CD8-positive, alpha-beta T cell (primary cell): ENCODE measurements at regions of chr17 and their contacts with region 1.

Region 1: DNA sequence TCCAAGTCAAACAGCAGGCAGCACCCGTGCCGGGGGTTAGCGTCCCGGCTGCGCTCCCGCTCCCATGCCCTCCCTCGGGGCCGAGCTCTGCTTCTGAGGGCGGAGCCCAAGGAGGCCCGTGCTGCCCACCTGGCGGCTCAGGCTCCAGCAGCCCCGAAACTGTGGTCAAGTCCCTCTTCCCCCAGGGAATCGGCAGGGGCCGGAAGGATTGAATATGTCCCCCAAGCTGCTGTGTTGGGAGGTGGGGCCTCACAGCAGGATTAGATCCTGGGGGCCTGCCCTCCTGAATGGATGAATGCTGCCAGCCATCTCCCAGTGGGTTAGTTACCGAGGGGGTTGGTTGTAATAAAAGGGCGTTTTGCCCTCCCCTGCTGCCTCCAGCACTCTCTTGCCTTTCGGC is 33.9 kb downstream of the MAP2K3 start:
- DNase-seq: no peak
- ATAC-seq: no peak
- H3K4me3 ChIP-seq: no peak overlapping the region
- H3K4me3 Mint-ChIP-seq: no peak overlapping the region
- H3K27ac ChIP-seq: no peak overlapping the region
- H3K27ac Mint-ChIP-seq: no peak overlapping the region
- H3K4me1 ChIP-seq: no peaks in the 10 kb centered on the region
- H3K4me1 Mint-ChIP-seq: peaks cover 5% of the 10 kb centered on the region
- H3K27me3 ChIP-seq: no peaks in the 10 kb centered on the region
- H3K27me3 Mint-ChIP-seq: no peaks in the 10 kb centered on the region
- CTCF ChIP-seq: no peak

Region 2: DNA sequence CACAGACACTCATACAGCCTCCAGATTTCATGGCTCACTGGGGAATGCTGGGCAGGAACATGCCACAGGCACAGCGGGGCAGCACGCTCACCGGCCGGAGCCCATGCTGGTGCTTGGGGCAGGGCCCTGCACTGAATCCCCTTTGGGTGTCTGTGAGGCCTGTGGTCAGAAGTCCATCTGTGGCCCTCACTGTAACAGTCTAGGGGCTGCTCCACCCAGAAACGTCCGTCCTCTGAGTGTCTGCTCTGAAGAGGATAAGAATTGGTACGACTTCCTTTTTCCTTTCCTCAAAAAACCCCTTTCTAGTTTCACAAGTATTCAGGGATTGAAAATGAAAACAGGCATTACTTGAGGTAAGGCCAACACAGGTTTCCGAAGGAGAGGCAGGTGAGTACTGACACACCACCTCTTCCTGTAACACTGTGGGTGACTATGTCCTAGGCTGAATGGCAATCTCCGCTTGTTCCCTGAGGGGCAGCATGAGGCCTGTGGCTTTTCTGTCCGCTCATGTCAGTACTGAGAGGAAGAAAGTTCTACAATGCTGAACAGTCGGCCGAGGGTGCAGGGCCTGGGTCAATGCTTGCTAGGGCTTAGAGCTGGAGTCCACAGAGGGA is 147.0 kb before region 1 on chr17:
- CTCF ChIA-PET with region 1: no interaction called
- POLR2A ChIA-PET with region 1: no interaction called
- intact Hi-C with region 1: no loop called
- DNase-seq: peak in 1 of 9 experiments; percentile 38
- ATAC-seq: no peak
- H3K4me3 ChIP-seq: no peak overlapping the region
- H3K4me3 Mint-ChIP-seq: no peak overlapping the region
- H3K27ac ChIP-seq: no peak overlapping the region
- H3K27ac Mint-ChIP-seq: no peak overlapping the region
- H3K4me1 ChIP-seq: no peaks in the 10 kb centered on the region
- H3K4me1 Mint-ChIP-seq: peaks cover 12% of the 10 kb centered on the region
- H3K27me3 ChIP-seq: no peaks in the 10 kb centered on the region
- H3K27me3 Mint-ChIP-seq: no peaks in the 10 kb centered on the region
- CTCF ChIP-seq: no peak

Region 3: DNA sequence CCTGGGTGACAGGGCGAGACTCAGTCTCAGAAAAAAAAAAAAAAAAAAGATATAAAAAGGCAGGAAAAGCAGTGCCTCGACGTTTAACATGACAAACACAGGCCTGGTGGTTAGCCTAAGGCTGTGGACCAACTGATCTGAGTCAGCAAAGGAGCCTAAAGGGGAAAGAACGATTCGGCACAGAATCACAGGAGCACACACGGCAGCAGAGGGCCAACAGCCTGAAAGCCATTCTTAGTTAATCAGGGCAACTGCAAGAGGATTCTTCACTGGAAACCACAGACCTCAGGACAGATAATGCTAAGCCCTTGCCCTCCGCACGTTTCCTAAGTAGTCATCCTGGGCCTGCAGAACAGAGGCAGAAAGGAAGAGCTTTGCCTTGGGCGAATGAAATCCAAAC is 119.1 kb before region 1 on chr17:
- CTCF ChIA-PET with region 1: no interaction called
- POLR2A ChIA-PET with region 1: no interaction called
- intact Hi-C with region 1: no loop called
- DNase-seq: no peak
- ATAC-seq: no peak
- H3K4me3 ChIP-seq: no peak overlapping the region
- H3K4me3 Mint-ChIP-seq: no peak overlapping the region
- H3K27ac ChIP-seq: no peak overlapping the region
- H3K27ac Mint-ChIP-seq: no peak overlapping the region
- H3K4me1 ChIP-seq: no peaks in the 10 kb centered on the region
- H3K4me1 Mint-ChIP-seq: peaks cover 35% of the 10 kb centered on the region
- H3K27me3 ChIP-seq: no peaks in the 10 kb centered on the region
- H3K27me3 Mint-ChIP-seq: no peaks in the 10 kb centered on the region
- CTCF ChIP-seq: no peak

Region 4: DNA sequence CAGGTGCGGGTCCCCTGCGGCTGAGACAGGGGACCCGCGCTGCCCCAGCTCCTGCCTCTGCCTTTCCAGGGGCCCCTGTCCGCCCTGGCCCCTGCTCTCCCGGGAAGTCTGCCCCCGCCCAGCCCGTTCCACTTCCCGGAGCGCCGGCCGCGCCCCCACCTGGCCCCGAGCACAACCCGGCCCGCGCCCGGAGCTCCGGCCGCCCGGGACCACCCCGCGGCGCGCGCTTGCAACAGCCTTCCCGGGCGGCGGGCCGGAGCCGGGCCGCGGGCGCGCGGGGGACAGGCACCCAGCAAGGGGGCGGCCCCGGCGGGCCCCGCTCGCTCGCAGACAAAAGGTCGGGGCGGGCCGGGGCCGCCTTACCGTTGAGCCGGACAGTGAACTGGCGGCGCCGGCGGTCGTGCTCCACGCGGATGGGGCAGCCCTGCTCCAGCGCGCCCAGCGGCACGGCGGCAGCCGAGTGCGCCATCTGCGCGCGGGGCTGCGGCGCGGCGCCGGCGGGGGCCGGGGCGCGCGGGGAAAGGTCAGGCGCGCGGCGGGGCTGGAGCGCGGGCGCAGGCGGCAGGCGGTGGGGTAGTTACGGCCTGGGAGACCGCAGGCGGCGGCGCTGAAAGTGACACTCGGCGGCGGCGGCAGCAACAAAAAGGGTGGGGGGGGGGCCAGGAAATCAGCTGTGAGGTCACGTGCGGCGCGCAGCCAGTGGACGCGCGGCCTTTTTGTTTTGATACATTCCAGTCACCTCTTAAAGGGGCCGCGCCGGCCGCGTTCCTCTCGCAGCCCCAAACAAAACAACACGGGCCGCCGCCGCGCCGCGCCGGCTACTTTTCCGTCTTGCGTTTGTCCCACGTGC is 65.4 kb before region 1 on chr17 and contains the start of gene NATD1:
- CTCF ChIA-PET with region 1: no interaction called
- POLR2A ChIA-PET with region 1: no interaction called
- intact Hi-C with region 1: loop called (anchors 2 kb)
- DNase-seq: peak; percentile 54 to 92 (median 80)
- ATAC-seq: peak; percentile 79
- H3K4me3 ChIP-seq: peak within 1 kb of the TSS; percentile 55 to 73
- H3K4me3 Mint-ChIP-seq: peak within 1 kb of the TSS; percentile 86
- H3K27ac ChIP-seq: peak within 1 kb of the TSS; percentile 62 to 64
- H3K27ac Mint-ChIP-seq: peak within 1 kb of the TSS; percentile 92
- H3K4me1 ChIP-seq: peaks cover 17% of the 10 kb centered on the region
- H3K4me1 Mint-ChIP-seq: peaks cover 34% of the 10 kb centered on the region
- H3K27me3 ChIP-seq: no peaks in the 10 kb centered on the region
- H3K27me3 Mint-ChIP-seq: no peaks in the 10 kb centered on the region
- CTCF ChIP-seq: no peak
- total RNA-seq, gene NATD1: 6.3 to 6.6 TPM

Region 5: DNA sequence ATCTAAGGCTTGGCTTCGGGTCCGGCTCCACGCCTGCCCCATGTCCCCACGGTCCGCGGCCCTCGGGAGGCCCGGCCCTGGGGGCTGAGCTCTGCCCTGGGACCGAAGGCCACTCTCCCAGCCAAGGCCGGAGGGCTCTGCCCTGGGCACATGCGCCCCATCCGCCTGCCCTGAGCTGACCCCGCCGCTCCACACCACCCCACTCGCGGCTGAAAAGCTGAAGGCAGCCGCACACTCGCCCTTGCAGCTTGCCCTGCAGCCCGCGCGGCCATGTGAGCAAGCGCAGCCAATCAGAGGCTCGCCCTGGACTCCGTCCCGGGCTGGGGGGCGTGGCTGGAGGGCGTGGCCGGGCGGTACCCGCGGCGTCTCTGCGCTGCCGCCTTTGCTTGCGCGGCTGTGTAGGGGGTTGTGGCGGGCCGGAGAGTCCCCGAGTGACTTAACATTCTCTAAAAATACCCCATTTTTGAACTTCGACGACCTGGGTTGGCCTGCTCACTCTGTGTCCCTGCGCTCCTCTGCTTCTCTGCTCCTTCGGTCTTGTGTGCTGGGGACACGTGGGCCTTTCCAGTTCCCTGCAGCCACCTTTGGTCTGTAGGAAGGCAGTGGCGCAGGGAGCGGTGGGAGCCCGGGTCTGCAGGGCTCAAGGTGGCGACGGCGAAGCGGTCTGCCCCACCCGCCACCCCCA is 42.7 kb before region 1 on chr17:
- CTCF ChIA-PET with region 1: interaction called, 3 read pairs
- POLR2A ChIA-PET with region 1: no interaction called
- intact Hi-C with region 1: loop called (anchors 2 kb)
- DNase-seq: peak; percentile 83 to 98 (median 94)
- ATAC-seq: peak; percentile 84
- H3K4me3 ChIP-seq: peak overlapping the region; percentile 60 to 80
- H3K4me3 Mint-ChIP-seq: peak overlapping the region; percentile 87
- H3K27ac ChIP-seq: peak overlapping the region; percentile 57 to 75
- H3K27ac Mint-ChIP-seq: peak overlapping the region; percentile 90
- H3K4me1 ChIP-seq: peaks cover 37% of the 10 kb centered on the region
- H3K4me1 Mint-ChIP-seq: peaks cover 42% of the 10 kb centered on the region
- H3K27me3 ChIP-seq: no peaks in the 10 kb centered on the region
- H3K27me3 Mint-ChIP-seq: no peaks in the 10 kb centered on the region
- CTCF ChIP-seq: no peak

Region 6: GRCh38 chr17:21284319-21285163 is 33.9 kb before region 1 on chr17 and contains the start of gene MAP2K3:
- CTCF ChIA-PET with region 1: interaction called, 3 read pairs
- POLR2A ChIA-PET with region 1: no interaction called
- intact Hi-C with region 1: loop called (anchors 1 to 2 kb)
- DNase-seq: peak; percentile 84 to 97 (median 94)
- ATAC-seq: peak; percentile 65
- H3K4me3 ChIP-seq: peak within 1 kb of the TSS; percentile 78 to 81
- H3K4me3 Mint-ChIP-seq: peak within 1 kb of the TSS; percentile 94
- H3K27ac ChIP-seq: peak within 1 kb of the TSS; percentile 69 to 99
- H3K27ac Mint-ChIP-seq: peak within 1 kb of the TSS; percentile 96
- H3K4me1 ChIP-seq: peaks cover 45% of the 10 kb centered on the region
- H3K4me1 Mint-ChIP-seq: peaks cover 54% of the 10 kb centered on the region
- H3K27me3 ChIP-seq: no peaks in the 10 kb centered on the region
- H3K27me3 Mint-ChIP-seq: no peaks in the 10 kb centered on the region
- CTCF ChIP-seq: no peak
- total RNA-seq, gene MAP2K3: 59.9 to 63.8 TPM

Region 7: DNA sequence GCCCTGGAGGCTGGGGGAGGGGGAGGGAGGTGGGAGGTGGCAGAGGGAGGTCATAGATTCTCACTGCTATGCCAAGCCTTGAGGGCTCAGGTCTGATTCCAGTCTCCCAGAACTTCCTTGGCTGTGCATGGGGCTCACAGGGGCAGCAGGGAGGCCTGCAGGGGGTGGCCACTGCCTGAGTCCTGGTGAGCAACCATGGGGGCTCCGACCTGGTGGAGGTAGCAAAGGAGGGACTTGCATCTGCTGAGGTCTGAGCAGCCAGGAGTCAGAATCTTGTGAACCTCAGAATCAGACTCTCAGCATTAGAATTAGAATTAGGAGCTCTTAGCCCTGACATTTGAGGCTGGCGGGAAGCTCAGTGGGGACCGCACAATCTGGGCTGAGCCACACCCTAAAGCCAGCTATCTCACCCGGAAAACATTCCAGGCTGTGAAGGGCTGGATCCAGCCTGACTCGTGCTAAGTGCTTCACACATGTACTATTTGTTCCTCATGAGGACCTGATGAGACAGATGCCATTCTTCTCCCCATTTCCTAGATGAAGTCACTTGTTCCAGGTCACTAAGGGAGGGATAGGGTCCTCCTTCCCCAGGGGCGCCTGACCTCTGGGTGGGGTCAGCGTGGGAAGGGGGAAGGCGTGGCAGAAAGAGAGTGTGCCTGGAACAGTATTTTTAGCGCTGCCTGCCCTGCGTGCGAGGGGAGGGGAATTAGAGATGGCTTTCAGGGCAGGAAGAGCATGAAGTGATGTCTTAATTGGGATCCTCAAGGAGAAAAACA is 40.5 kb after region 1 on chr17:
- CTCF ChIA-PET with region 1: no interaction called
- POLR2A ChIA-PET with region 1: no interaction called
- intact Hi-C with region 1: no loop called
- DNase-seq: no peak
- ATAC-seq: no peak
- H3K4me3 ChIP-seq: no peak overlapping the region
- H3K4me3 Mint-ChIP-seq: no peak overlapping the region
- H3K27ac ChIP-seq: no peak overlapping the region
- H3K27ac Mint-ChIP-seq: no peak overlapping the region
- H3K4me1 ChIP-seq: no peaks in the 10 kb centered on the region
- H3K4me1 Mint-ChIP-seq: no peaks in the 10 kb centered on the region
- H3K27me3 ChIP-seq: peaks cover 0 to 4% of the 10 kb centered on the region in 2 experiments
- H3K27me3 Mint-ChIP-seq: no peaks in the 10 kb centered on the region
- CTCF ChIP-seq: no peak

Region 8: DNA sequence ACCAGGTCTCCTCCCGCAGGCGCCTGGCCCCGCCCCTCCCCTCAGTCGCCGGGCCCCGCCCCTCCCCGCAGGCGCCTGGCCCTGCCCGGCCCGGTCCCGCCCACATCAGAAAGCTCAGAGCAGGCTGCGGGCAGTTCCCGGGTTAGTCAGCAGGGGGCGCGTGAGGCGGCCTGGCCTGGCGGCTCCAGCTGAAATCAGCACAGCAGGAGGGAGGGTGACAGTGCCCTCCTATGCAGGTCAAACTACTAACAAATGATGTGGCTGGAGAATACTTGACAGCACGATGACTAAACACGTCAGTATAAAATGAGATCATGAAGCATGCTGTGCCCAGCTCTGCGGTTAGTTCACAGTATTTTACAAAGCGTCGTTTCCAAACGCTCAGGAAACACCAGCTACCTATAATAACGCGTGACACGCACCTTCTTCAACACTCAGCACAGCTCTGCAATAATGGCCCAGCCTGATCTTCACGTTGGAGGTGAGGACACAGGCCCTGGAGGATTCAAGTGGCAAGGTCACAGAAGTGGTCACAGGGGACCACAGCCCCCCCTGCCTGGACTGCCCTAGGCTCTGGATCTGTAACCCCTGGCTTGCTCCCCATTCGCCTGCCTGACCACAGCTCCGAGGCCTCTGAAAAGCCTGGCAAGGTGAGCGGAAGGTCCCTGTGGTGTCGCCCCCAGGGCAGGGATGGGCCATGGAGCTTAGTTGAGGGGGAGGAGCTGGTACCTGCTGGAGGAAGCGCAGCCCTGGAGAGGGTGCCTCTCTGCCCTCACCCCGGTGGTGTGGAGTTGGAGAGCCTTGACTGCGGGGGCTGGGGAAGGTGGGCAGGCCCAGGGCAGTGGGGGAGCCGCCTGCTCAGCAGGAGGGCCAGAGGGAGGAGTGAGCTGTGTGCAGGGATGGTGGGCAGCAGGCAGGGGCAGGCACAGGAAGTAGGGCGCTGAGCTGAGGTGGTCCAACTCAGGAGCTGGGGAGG is 138.9 kb after region 1 on chr17:
- CTCF ChIA-PET with region 1: no interaction called
- POLR2A ChIA-PET with region 1: no interaction called
- intact Hi-C with region 1: loop called (anchors 5 to 10 kb)
- DNase-seq: peak; percentile 81 to 97 (median 90)
- ATAC-seq: peak; percentile 91
- H3K4me3 ChIP-seq: no peak overlapping the region
- H3K4me3 Mint-ChIP-seq: peak overlapping the region; percentile 15
- H3K27ac ChIP-seq: no peak overlapping the region
- H3K27ac Mint-ChIP-seq: peak overlapping the region; percentile 86
- H3K4me1 ChIP-seq: peaks cover 20% of the 10 kb centered on the region
- H3K4me1 Mint-ChIP-seq: peaks cover 22% of the 10 kb centered on the region
- H3K27me3 ChIP-seq: no peaks in the 10 kb centered on the region
- H3K27me3 Mint-ChIP-seq: peaks cover 7% of the 10 kb centered on the region
- CTCF ChIP-seq: peak; percentile 86